CD4-positive, alpha-beta memory T cell (primary cell): ENCODE measurements at regions of chr21 and their contacts with region 1.

Region 1: DNA sequence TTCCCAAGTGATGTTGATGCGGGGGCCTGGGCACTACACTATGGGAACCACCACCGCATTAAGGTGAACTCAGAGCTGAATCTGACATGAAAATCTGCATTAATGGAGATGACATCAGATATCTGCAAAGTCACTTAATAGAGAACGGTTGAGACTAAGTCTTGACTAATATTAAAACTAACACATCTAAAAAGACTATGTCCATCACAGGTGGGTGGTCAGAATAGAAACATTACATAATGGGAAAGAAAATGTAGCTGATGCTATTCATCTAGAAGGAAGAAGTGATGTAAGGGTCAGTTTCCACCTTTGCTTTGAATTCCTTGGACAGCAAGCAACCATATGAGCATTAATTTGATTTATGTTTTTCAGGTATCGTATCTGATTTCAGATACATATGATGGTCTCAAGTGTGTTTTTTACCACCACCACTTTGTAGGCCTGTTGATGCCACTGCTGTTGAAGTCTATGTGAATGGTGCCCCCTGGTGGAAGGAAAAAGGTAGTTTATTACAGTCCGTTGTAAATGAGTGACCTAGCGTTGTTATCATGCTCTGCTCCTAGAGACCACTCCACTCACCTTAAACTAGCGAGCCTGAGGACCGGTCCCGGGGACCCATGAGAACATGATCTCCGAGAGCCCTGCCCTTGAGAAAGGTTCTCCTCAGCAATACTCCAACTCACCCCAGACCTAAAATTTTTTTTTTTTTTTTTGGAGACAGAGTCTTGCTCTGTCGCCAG is 73.5 kb downstream of the BACH1 start:
- DNase-seq: peak; percentile 58 to 72 (median 67)
- H3K4me3 ChIP-seq: no peak overlapping the region
- H3K4me3 Mint-ChIP-seq: no peak overlapping the region
- H3K27ac ChIP-seq: no peak overlapping the region
- H3K27ac Mint-ChIP-seq: peak overlapping the region in 3 of 7 donors; percentile 57 to 63 (median 63)
- H3K4me1 ChIP-seq: peaks cover 8% of the 10 kb centered on the region
- H3K4me1 Mint-ChIP-seq: peaks cover 9 to 15% (median 10%) of the 10 kb centered on the region in 4 donors
- H3K27me3 ChIP-seq: no peaks in the 10 kb centered on the region
- H3K27me3 Mint-ChIP-seq: no peaks in the 10 kb centered on the region

Region 2: DNA sequence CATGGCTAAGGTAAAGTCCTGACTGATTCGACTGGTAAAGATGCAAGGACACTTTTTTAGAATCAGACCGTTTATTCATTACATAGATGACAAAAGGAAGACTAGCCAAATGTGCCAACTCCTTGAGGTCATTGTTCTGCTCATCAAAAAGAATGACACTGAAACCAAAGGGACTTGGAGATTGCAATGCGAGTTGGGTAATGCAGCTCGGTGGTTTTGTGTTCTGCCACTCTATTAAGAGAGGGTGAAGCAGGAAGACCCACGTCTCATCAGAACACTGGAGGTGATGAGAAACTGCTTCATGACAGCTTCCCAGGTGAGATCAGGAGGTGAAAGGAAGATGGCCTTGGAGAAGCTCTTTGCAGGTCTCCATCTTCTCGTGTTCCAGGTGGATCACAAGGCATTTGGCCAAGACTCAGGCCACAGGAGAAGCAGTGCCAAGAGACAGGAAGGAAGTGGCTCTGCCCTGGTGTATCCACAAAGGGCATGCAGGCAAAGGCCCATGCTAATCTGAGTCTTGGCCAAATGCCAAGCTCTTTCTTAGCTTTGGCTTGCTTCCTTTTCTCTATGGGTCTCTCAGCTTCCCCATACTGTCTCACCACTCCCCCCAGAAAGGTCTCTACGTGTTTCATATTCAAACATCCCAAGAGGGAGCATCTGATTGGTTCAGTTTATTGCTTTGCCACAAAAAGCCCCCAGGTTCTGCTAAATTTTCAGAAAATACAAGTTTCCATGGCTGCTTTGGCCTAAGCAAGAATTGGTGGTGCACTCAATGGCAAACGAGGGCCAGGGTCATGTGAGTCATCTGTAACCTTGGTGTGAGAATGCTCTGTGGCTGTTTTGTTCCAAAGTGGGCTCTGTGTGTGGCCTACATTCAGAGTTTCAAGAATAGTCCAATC is 293.1 kb before region 1 on chr21:
- CTCF ChIA-PET with region 1: interaction called, 16 read pairs
- POLR2A ChIA-PET with region 1: interaction called, 4 read pairs
- intact Hi-C with region 1: no loop called
- DNase-seq: peak; percentile 37 to 44 (median 40)
- H3K4me3 ChIP-seq: no peak overlapping the region
- H3K4me3 Mint-ChIP-seq: peak overlapping the region; percentile 37 to 79 (median 70)
- H3K27ac ChIP-seq: peak overlapping the region; percentile 33
- H3K27ac Mint-ChIP-seq: peak overlapping the region; percentile 88 to 95 (median 93)
- H3K4me1 ChIP-seq: peaks cover 53% of the 10 kb centered on the region
- H3K4me1 Mint-ChIP-seq: peaks cover 22 to 71% (median 48%) of the 10 kb centered on the region in 4 donors
- H3K27me3 ChIP-seq: no peaks in the 10 kb centered on the region
- H3K27me3 Mint-ChIP-seq: no peaks in the 10 kb centered on the region

Region 3: DNA sequence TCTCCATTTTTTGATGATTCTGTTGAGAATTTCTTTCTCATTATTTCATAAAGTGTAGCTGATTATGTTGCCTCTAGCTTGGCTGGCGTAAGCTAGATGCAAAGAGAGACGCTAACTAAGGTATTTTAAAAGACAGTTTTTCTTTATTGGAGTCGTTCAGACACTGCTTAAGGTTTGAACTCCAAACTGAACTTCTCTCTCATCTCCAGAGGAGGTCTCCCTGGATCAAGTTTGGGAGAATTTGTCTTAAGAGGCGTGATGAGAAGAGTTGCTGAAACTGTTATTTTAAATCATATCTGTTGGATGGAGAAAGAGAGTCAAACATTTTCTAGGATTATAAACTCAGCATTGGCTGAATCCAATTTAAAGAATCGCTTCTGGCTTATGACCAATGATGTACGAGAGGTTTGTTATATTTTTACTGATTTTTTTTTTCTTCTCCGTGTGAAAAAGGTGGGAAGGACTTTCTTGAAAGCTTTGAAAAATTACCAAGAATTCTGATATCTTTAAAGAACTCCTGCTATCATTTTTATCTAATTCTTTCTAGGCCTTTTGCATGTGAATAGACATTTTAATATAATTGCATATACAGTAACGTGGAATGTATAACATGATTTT is 207.8 kb before region 1 on chr21:
- CTCF ChIA-PET with region 1: interaction called, 10 read pairs
- POLR2A ChIA-PET with region 1: no interaction called
- intact Hi-C with region 1: loop called (anchors 1 kb)
- DNase-seq: no peak
- H3K4me3 ChIP-seq: no peak overlapping the region
- H3K4me3 Mint-ChIP-seq: no peak overlapping the region
- H3K27ac ChIP-seq: no peak overlapping the region
- H3K27ac Mint-ChIP-seq: no peak overlapping the region
- H3K4me1 ChIP-seq: no peaks in the 10 kb centered on the region
- H3K4me1 Mint-ChIP-seq: peaks cover 0 to 2% (median 0%) of the 10 kb centered on the region in 4 donors
- H3K27me3 ChIP-seq: no peaks in the 10 kb centered on the region
- H3K27me3 Mint-ChIP-seq: no peaks in the 10 kb centered on the region

Region 4: GRCh38 chr21:29232601-29233546 is 139.4 kb before region 1 on chr21:
- CTCF ChIA-PET with region 1: interaction called, 4 read pairs
- POLR2A ChIA-PET with region 1: no interaction called
- intact Hi-C with region 1: loop called (anchors 1 kb)
- DNase-seq: peak in 1 of 5 donors; percentile 3
- H3K4me3 ChIP-seq: no peak overlapping the region
- H3K4me3 Mint-ChIP-seq: peak overlapping the region in 1 of 8 donors; percentile 7
- H3K27ac ChIP-seq: no peak overlapping the region
- H3K27ac Mint-ChIP-seq: no peak overlapping the region
- H3K4me1 ChIP-seq: peaks cover 5% of the 10 kb centered on the region
- H3K4me1 Mint-ChIP-seq: peaks cover 0 to 9% (median 8%) of the 10 kb centered on the region in 4 donors
- H3K27me3 ChIP-seq: no peaks in the 10 kb centered on the region
- H3K27me3 Mint-ChIP-seq: peaks cover 0 to 3% of the 10 kb centered on the region in 2 donors

Region 5: DNA sequence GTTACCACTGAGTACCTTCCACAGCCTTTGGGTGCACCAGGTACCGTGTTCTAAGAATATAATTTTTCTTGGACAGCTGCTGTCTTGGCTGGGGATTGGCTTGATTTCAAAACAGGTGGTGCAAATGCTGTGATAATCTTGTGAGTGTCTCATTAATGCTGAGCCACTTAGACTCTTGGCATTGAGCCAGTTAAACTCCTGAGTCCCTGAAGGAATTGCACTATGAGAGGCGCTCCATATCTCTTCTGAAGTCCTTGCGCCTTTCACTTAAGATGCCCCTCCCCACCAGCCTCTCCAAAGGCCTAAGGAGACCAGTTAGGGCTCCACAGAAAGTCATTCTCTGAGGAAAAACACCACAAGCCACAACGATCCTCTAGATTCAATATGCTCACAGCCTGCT is 22.5 kb before region 1 on chr21:
- CTCF ChIA-PET with region 1: interaction called, 16 read pairs
- POLR2A ChIA-PET with region 1: no interaction called
- intact Hi-C with region 1: no loop called
- DNase-seq: no peak
- H3K4me3 ChIP-seq: no peak overlapping the region
- H3K4me3 Mint-ChIP-seq: no peak overlapping the region
- H3K27ac ChIP-seq: no peak overlapping the region
- H3K27ac Mint-ChIP-seq: peak overlapping the region in 1 of 7 donors; percentile 34
- H3K4me1 ChIP-seq: peaks cover 7% of the 10 kb centered on the region
- H3K4me1 Mint-ChIP-seq: peaks cover 9 to 15% (median 12%) of the 10 kb centered on the region in 4 donors
- H3K27me3 ChIP-seq: no peaks in the 10 kb centered on the region
- H3K27me3 Mint-ChIP-seq: no peaks in the 10 kb centered on the region

Region 6: DNA sequence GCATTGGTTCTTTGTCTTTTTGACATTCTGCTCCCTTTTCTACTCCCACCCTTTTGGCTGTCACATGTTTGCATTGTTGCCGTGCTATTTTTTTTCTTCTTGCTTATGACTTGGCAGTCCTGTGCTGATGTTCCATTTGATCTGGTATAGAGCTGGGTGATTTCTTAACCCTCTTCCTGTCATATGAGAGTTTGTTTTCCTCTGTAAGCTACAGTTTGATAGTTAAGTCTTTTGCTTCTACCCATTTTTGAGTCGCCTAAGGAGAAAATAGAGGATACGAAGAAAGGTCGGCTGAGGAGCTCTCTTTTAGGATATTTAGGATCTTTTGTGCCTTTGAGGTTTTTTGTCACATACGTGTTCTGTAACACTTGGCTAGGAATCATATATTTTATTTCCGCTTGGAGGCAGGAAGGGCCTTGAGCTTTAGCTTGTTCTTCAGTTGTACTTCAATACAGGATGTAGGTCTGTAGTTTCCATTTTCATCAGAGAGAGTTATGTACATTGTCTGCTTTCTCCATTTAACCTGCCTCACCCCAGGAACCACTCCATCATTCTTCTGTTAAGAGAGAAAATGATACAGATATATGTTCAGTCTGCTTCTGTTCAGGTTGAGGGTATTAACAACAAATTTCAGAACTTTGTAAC is 77.2 kb after region 1 on chr21:
- CTCF ChIA-PET with region 1: interaction called, 15 read pairs
- POLR2A ChIA-PET with region 1: interaction called, 3 read pairs
- intact Hi-C with region 1: no loop called
- DNase-seq: peak; percentile 41 to 86 (median 80)
- H3K4me3 ChIP-seq: no peak overlapping the region
- H3K4me3 Mint-ChIP-seq: peak overlapping the region; percentile 22 to 78 (median 64)
- H3K27ac ChIP-seq: peak overlapping the region; percentile 41
- H3K27ac Mint-ChIP-seq: peak overlapping the region; percentile 89 to 95 (median 93)
- H3K4me1 ChIP-seq: peaks cover 24% of the 10 kb centered on the region
- H3K4me1 Mint-ChIP-seq: peaks cover 16 to 40% (median 20%) of the 10 kb centered on the region in 4 donors
- H3K27me3 ChIP-seq: no peaks in the 10 kb centered on the region
- H3K27me3 Mint-ChIP-seq: no peaks in the 10 kb centered on the region